A673 (cell line): ENCODE measurements at regions of chr20 and their contacts with region 1.

Region 1: DNA sequence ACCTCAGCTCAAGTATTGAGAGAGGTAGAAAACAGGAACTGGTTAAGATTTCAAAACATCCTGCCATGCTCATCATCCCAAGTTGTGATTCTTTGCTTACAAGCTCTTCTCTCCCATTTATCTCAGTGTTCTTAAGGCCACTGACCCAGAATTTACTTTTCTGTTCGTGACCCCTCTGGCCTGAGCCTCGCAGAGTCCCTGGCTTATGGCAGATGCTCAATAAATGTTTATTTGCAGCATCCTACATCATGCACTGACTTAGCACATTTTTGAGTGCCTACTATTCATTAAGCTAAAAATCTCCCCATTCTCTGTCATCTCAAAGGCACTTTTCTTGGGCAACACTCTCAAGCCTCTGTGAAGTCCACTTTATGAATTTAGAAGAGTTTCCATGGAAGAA is 33.4 kb upstream of the MC3R start:
- DNase-seq: no peak
- H3K4me3 ChIP-seq: no peak overlapping the region
- H3K27ac ChIP-seq: no peak overlapping the region
- H3K4me1 ChIP-seq: no peaks in the 10 kb centered on the region
- H3K27me3 ChIP-seq: no peaks in the 10 kb centered on the region
- CTCF ChIP-seq: no peak

Region 2: GRCh38 chr20:55656231-55656775 is 558.8 kb before region 1 on chr20:
- CTCF ChIA-PET with region 1: no interaction called
- POLR2A ChIA-PET with region 1: no interaction called
- intact Hi-C with region 1: no loop called
- DNase-seq: no peak
- H3K4me3 ChIP-seq: no peak overlapping the region
- H3K27ac ChIP-seq: no peak overlapping the region
- H3K4me1 ChIP-seq: no peaks in the 10 kb centered on the region
- H3K27me3 ChIP-seq: no peaks in the 10 kb centered on the region
- CTCF ChIP-seq: no peak

Region 3: DNA sequence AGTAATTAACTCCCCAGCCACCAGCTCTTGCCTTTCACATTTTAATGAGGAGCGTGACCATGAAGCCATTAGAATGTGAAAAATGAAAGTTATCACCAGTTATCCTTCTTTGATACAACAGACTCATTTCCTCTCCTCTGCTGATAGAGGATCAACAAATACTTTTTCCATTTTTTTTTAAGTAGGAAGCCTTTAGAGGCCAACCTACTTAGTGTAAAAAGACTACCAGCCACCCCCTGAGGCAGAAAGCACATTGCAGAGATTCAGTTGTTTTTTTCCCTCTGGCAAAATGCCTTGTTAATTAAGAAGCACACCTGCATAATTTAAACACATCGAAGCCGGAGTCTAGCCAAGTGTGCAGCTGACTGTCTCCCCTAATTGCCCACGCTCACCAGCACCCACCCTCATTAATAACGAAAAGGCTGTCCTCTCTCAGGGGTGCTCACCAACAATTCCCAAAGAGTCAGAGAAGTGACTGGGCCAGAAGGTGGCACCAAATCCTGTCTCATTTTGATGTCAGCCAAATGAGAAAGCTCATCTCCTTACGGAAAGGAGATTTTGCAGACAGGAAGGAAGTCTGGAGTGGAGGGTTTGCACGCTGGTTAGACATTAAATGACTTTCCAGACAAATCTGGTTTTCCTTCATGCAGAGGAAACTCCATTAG is 27.4 kb before region 1 on chr20:
- CTCF ChIA-PET with region 1: no interaction called
- POLR2A ChIA-PET with region 1: no interaction called
- intact Hi-C with region 1: loop called (anchors 1 kb)
- DNase-seq: peak; percentile 53
- H3K4me3 ChIP-seq: no peak overlapping the region
- H3K27ac ChIP-seq: no peak overlapping the region
- H3K4me1 ChIP-seq: no peaks in the 10 kb centered on the region
- H3K27me3 ChIP-seq: no peaks in the 10 kb centered on the region
- CTCF ChIP-seq: peak; percentile 50

Region 4: DNA sequence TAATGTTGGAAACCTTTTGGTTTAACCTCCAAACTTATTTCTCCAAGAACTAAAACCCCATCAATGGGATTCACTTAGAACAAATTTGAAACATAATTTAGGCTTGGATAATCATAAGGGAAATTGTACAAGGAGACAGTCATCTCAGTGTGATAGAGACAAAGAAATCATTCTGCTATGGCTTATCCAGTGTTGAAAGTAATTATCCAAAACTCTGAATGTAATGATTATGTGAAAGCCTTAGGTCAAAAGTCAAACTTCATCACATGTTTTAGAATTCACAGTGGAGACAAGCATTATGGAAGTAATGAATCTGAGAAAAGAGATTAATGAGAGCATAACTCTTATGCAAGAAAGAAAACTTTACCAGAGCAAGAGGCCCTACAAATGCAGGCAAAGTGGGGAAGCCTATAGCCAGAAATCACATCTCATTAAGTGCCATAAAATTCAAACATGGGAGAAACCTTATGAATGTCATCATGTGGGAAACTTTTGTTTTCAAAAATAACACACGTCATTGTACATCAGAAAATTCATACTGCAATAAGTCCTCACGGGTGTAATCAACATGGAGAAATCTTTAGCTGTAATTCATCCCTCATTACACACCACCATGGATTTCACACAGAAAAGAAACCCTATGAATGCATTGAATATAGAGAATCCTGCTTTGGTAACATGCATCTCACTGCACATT is 53.6 kb after region 1 on chr20:
- CTCF ChIA-PET with region 1: no interaction called
- POLR2A ChIA-PET with region 1: no interaction called
- intact Hi-C with region 1: no loop called
- DNase-seq: no peak
- H3K4me3 ChIP-seq: no peak overlapping the region
- H3K27ac ChIP-seq: no peak overlapping the region
- H3K4me1 ChIP-seq: no peaks in the 10 kb centered on the region
- H3K27me3 ChIP-seq: peaks cover 11% of the 10 kb centered on the region
- CTCF ChIP-seq: no peak

Region 5: DNA sequence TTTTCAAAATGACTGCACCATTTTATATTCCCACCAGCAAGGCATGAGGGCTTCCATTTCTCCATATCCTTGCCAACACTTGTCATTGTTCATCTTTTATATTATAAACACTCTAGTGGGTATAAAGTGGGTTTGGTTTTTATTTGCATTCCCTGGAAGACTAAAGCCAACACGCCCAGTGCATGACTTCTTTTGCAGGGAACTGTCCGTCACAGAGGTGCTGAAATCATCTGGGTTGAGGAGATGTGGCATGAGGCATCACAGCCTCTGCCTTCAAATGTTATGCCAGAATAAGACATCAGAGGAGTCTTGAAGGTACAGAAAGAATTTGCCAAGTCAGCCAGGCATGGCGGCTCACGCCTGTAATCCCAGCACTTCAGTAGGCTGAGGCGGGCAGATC is 113.7 kb after region 1 on chr20:
- CTCF ChIA-PET with region 1: no interaction called
- POLR2A ChIA-PET with region 1: no interaction called
- intact Hi-C with region 1: no loop called
- DNase-seq: peak; percentile 48
- H3K4me3 ChIP-seq: no peak overlapping the region
- H3K27ac ChIP-seq: no peak overlapping the region
- H3K4me1 ChIP-seq: no peaks in the 10 kb centered on the region
- H3K27me3 ChIP-seq: peaks cover 5% of the 10 kb centered on the region
- CTCF ChIP-seq: no peak

Region 6: GRCh38 chr20:56630479-56630999 is 415.4 kb after region 1 on chr20:
- CTCF ChIA-PET with region 1: no interaction called
- POLR2A ChIA-PET with region 1: no interaction called
- intact Hi-C with region 1: no loop called
- DNase-seq: no peak
- H3K4me3 ChIP-seq: peak overlapping the region; percentile 38
- H3K27ac ChIP-seq: no peak overlapping the region
- H3K4me1 ChIP-seq: peaks cover 13% of the 10 kb centered on the region
- H3K27me3 ChIP-seq: peaks cover 100% of the 10 kb centered on the region
- CTCF ChIP-seq: 0 out of 2 replicates have a peak, but pooled peaks have one; percentile 15